A549 (cell line): ENCODE measurements at regions of chr2 and their contacts with region 1.

Region 1: DNA sequence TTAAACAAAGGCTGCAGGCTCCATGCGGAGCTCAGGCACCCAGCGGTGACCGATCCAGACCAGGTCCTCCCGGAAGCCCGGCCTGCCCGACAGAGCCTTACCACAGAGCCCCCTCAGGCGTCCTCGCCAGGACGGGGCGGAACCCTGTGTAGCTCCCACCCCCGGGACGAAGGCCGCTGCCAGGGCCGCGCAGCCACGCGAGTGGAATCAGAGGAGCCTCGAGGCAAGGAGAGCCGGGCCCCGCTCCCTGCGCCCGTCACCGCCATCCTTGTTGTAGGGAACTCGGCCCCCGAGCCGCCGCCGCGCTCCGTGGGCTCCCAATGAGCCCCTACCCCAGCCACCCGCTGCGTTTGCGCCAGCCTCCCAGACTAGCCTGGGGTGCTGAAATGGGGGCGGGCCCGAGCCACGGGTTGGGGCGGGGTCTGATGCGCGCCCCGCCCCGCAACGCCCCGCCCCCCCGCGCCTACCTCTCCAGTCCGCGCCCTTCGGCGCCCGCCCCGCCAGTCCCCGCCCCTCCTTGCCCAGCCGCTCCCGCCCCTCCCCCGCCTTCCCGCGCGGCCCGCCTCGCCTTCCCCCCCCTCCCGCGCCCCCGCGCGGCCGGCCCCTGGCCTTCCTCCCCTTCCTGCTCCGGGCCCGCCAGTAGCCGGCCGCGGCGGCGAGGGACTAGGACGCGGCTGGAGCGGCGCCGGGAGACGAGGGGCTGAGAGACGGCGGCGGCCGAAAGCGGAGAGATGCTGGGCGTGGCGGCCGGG is at the start of gene LIMS1:
- DNase-seq: peak; percentile 85 to 94
- ATAC-seq: peak; percentile 95 to 98
- H3K4me3 ChIP-seq: peak within 1 kb of the TSS; percentile 70
- H3K27ac ChIP-seq: peak within 1 kb of the TSS; percentile 97 to 99
- H3K4me1 ChIP-seq: peaks cover 47% of the 10 kb centered on the region
- CTCF ChIP-seq: no peak
- EP300 ChIP-seq: peak in 1 of 2 experiments; percentile 12; a peak in 1 of 5 replicates
- POLR2A ChIP-seq: peak; percentile 87
- RAD21 ChIP-seq: no peak
- polyA plus RNA-seq, gene LIMS1: 92.0 and 94.1 TPM in 2 replicates

Region 2: GRCh38 chr2:108193251-108193650 is 340.8 kb before region 1 on chr2:
- CTCF ChIA-PET with region 1: no interaction called
- POLR2A ChIA-PET with region 1: no interaction called
- DNase-seq: peak in 1 of 2 experiments; percentile 68
- ATAC-seq: peak; percentile 65 to 84; a peak in 5 of 6 replicates
- H3K4me3 ChIP-seq: no peak overlapping the region
- H3K27ac ChIP-seq: peak overlapping the region; percentile 60 to 74; a peak in 5 of 6 replicates
- H3K4me1 ChIP-seq: peaks cover 31% of the 10 kb centered on the region
- CTCF ChIP-seq: no peak
- EP300 ChIP-seq: peak in 1 of 2 experiments; percentile 65; a peak in 1 of 5 replicates
- POLR2A ChIP-seq: no peak
- RAD21 ChIP-seq: no peak

Region 3: DNA sequence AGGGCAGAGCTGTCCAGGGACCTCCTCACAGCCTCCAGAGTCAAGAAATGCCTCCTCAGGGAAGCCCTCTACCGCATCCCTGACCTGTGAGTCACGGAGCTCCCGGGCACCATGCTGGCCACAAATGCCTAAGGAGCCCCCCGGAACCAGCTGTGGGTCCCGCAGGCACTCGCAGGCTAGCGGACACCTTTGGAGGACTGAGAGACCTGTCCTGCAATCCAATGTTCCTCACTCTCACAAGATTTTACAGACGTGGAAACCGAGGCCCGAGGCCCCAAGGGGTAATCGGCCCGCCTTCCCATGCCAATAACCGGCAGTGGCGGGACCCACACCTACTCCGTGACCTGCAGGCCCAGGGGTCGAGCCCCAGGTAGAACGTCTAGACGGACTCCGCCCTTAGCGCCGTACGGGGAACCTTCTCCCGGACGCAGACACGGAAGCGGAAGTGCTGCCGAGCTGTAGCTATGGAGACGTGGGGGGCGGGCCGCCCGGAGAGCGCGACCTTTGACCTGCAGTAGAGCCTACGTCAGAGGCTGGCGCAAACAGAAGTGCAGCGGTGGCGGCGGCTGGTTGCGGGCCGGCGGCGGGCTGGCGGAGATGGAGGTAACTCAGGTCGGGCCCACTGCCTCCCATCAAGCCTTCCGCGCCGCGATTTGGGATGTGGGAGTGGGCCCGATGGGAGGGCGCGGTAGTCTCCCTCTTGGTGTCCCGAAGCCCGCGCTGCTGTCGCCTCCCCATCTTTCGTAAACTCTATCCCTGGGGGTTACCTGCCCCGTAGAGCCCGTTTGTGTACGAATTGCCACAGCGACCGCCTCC is 85.1 kb before region 1 on chr2 and contains the start of gene GCC2:
- CTCF ChIA-PET with region 1: no interaction called
- POLR2A ChIA-PET with region 1: interaction called, 11 read pairs
- DNase-seq: peak; percentile 70 to 96
- ATAC-seq: peak; percentile 96 to 98
- H3K4me3 ChIP-seq: peak within 1 kb of the TSS; percentile 98
- H3K27ac ChIP-seq: peak within 1 kb of the TSS; percentile 96 to 99
- H3K4me1 ChIP-seq: peaks cover 24% of the 10 kb centered on the region
- CTCF ChIP-seq: no peak
- EP300 ChIP-seq: no peak
- POLR2A ChIP-seq: peak; percentile 79
- RAD21 ChIP-seq: 0 out of 5 replicates have a peak, but pooled peaks of 1 of the 2 experiments have one; percentile 20
- polyA plus RNA-seq, gene GCC2: 19.0 and 30.1 TPM in 2 replicates

Region 4: DNA sequence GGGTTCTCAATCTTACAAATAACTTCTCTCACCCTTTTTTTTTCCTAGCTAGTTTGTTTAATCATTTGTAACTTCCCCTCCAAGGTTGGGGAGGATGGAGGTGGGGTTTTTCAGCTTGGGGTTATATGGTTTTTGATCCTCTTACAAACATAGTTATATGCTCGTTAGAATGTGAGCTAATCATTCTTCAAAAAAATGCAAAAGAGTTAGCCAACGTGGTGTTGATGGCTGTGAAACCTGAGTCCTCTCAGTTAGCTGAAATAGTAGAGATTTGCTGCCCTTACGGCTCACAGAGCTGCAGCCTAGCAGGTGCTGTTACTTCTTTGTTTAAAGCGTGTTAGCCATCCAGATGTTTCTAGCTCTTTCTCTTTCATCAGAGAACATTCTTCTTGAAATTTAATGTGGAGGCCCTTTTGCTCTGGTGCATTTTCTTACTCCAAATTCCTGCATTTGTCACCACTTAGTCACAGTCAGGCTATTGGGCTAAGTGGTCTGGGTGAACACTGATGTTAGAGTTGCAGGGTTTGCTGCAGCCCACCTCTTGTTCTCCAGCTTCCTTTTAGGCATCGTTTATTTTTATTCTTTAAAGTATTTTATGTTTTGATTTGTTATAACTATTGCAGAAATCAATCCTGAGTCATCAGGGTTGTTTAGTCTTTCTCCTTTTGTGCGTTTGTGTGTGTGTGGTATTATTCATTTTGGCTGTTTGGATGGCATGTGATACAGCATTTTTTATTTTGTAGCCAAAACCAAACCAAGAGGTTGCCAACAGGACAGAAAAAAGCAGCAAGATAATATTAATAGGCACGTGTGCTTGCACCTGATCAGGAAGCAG is 41.3 kb after region 1 on chr2:
- CTCF ChIA-PET with region 1: interaction called, 8 read pairs
- POLR2A ChIA-PET with region 1: interaction called, 30 read pairs
- DNase-seq: peak in 1 of 2 experiments; percentile 25
- ATAC-seq: peak; percentile 39 to 55; a peak in 3 of 6 replicates
- H3K4me3 ChIP-seq: no peak overlapping the region
- H3K27ac ChIP-seq: peak overlapping the region; percentile 76 to 82
- H3K4me1 ChIP-seq: peaks cover 100% of the 10 kb centered on the region
- CTCF ChIP-seq: no peak
- EP300 ChIP-seq: peak in 1 of 2 experiments; percentile 60; a peak in 1 of 5 replicates
- POLR2A ChIP-seq: no peak
- RAD21 ChIP-seq: no peak

Region 5: DNA sequence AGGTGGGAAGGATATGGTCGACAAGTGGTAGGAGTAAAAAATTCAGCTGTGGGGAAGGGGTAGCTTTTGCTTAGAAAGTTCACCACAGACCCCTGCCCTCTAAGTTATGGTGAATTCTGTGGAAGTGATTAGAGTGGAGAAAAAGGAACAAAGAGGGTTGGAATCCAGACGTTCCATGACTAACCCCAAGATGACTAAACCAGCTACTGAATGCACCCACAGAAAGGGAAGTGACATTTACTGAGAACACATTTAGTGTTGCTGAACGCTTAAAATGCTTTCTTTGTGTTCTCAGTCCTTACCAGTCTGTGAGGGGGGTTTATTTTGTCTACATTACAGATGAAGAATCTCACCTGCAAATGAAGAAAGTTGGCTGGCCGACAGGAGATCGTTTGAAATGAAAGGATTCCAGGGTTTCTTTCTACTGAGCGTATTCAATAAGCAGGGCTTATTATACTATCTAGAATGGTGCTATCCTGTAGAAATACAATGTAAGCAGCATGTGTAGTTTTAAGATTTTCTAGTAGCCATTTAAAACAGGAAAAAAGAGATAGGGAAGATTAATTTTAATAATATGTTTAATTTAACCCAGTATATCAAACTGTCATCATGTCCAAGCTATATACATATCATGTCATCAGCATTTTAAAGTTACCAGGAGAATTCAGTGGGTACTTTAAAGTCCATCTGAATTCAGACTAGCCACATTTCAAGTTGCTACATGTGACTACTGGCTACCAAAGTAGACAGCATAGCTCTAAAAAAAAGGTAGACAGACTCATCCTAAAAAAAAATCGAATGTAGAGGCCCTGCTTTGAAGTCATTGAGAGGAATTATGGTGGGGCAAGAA is 60.3 kb after region 1 on chr2:
- CTCF ChIA-PET with region 1: interaction called, 4 read pairs
- POLR2A ChIA-PET with region 1: interaction called, 13 read pairs
- DNase-seq: peak in 1 of 2 experiments; percentile 76
- ATAC-seq: peak; percentile 80 to 81
- H3K4me3 ChIP-seq: 0 out of 3 replicates have a peak overlapping the region, but pooled peaks have one; percentile 5
- H3K27ac ChIP-seq: peak overlapping the region; percentile 85 to 86
- H3K4me1 ChIP-seq: peaks cover 58% of the 10 kb centered on the region
- CTCF ChIP-seq: no peak
- EP300 ChIP-seq: peak; percentile 29 to 39; a peak in 1 of 5 replicates
- POLR2A ChIP-seq: no peak
- RAD21 ChIP-seq: 0 out of 5 replicates have a peak, but pooled peaks of 1 of the 2 experiments have one; percentile 9